AG04449 (cell line): ENCODE measurements at regions of chr7 and their contacts with region 1.

Region 1: DNA sequence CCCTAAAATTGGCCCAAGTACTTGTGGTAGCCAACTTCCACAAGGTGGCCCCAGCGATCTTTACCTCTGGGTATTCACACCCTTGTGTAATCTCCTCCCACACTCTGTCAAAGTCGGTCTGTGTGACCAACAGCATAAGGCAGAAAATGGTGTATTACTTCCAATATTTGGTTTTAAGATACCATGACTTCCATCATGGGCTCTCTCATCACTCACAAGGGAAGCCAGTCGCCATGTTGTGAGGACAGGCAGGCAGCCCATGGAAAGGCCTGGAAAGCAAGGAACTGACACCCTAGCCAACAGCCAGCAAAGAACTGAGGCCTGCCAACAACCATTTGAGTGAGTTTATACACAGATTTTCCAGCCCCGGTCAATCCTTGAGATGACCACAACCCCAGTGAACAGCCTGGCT is 91.0 kb upstream of the KMT2E start:
- DNase-seq: peak; percentile 57
- H3K4me3 ChIP-seq: no peak overlapping the region
- CTCF ChIP-seq: peak; percentile 65

Region 2: DNA sequence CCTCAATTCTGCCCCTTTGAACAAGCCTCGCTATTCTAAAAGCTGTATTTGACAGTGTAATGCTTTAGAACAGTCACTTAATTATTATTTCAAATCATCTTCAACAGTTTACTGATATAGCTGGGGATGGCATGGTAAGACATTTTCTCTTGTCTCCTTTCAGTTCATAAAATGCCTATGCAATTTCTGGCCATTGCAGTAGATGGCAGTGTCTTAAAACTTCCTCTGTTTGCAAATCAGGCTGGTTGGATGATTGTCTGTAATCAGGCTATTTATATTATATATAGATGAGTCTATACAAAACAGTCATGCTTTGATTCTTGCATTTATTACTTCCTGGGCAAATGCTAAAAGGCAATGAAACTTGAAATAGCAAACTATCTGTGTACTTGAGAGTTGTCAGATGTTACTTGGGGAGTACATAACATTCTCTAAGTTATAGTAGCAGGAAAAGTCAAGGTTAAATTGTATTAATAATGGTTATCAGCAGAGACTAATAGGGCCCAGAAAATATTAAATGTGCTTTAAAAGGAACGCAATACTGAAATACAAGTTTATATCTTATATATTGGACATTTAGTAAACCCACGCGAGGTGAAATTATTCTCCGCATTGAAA is 650.1 kb before region 1 on chr7:
- CTCF ChIA-PET with region 1: interaction called, 11 read pairs
- POLR2A ChIA-PET with region 1: no interaction called
- DNase-seq: peak; percentile 10
- H3K4me3 ChIP-seq: no peak overlapping the region
- CTCF ChIP-seq: peak; percentile 34

Region 3: GRCh38 chr7:104895522-104896236 is 27.3 kb before region 1 on chr7:
- CTCF ChIA-PET with region 1: interaction called, 417 read pairs
- POLR2A ChIA-PET with region 1: no interaction called
- DNase-seq: no peak
- H3K4me3 ChIP-seq: no peak overlapping the region
- CTCF ChIP-seq: no peak

Region 4: DNA sequence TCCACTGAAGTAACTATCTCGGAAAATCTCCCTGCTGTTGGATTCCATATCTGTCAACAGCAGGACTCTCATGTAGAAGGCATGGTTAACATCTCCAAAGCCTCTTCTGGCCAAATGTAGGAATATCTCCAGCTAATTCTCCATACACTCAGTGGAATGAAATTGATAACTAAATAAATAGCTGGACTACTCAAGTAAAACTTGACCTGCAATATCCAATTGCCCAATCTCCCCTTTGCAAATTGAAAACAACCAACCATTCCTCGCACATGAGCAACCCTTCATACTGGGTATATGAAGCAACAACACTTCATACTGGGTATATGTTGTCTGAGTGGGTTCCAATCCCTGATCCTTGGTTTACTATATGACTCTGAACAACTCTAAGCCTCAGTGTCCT is 14.4 kb before region 1 on chr7:
- CTCF ChIA-PET with region 1: interaction called, 16 read pairs
- POLR2A ChIA-PET with region 1: no interaction called
- DNase-seq: no peak
- H3K4me3 ChIP-seq: no peak overlapping the region
- CTCF ChIP-seq: no peak